Activated B cell treated with CpG ODN at 0.5 μM for 24 hours (primary cell): ENCODE measurements at regions of chr3 and their contacts with region 1.

Region 1: DNA sequence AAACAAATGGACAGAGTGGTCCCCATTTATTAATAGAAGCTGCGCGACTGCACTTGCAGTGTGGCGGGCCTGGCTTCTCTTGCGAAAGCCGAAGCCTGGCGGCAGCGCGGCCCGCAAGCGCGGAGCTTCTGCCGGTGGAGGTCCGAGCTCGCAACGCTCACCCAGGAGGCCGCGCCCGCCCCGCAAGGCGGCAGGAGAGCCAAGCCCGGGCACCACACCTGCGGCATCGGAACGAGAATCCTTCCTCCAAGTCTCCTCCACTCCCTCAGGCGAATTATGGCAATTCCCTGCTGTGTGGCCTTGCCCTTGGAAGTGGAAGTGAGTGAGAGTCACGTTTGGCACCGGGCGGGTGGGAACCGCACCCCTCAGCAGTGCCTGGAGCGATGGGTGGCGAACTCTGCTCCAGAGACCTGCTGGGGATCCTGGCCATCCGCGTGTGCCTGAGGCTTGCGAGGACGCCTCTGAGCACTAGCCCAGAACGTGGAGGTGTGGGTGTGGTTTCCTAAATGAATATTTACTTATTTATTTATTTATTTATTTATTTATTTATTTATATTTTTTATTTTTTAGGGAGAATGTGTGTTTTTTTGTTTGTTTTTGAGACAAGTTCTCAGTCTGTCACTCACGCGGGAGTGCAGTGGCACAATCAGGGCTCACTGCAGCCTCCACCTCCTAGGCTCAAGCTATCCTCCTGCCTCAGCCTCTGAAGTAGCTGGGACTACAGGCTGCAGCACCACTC is 133.7 kb upstream of the UBE2E1 start:
- DNase-seq: peak; percentile 22
- ATAC-seq: no peak
- H3K4me3 Mint-ChIP-seq: peak overlapping the region; percentile 64
- H3K27ac Mint-ChIP-seq: no peak overlapping the region
- H3K4me1 Mint-ChIP-seq: peaks cover 10% of the 10 kb centered on the region
- H3K27me3 Mint-ChIP-seq: peaks cover 17% of the 10 kb centered on the region
- CTCF ChIP-seq: no peak

Region 2: DNA sequence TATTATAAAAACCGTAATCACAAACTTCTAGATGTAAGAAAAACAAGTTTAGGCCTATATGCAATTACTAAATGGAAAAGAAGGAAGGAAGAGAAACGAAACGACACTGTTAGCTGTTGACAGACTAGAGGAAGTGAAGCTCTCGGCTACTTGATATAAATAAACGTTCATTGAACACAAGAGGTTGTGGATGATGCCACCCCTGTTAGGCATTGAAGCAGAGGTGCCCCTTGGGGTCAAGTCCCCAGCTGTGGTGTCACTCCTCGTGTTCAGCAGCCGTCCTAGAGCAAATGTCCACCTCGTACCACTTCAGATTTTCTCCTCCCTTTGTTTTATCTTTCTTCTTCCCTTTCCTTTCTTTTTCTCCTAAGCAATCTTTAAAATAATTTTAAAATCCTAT is 12.7 kb before region 1 on chr3:
- CTCF ChIA-PET with region 1: interaction called, 4 read pairs
- POLR2A ChIA-PET with region 1: no interaction called
- intact Hi-C with region 1: loop called (anchors 2 kb)
- DNase-seq: no peak
- ATAC-seq: peak; percentile 87
- H3K4me3 Mint-ChIP-seq: peak overlapping the region; percentile 63
- H3K27ac Mint-ChIP-seq: peak overlapping the region; percentile 82
- H3K4me1 Mint-ChIP-seq: peaks cover 78% of the 10 kb centered on the region
- H3K27me3 Mint-ChIP-seq: no peaks in the 10 kb centered on the region
- CTCF ChIP-seq: no peak